ENCODE measurements at regions of chr11 and their contacts with region 1.

Region 1: GRCh38 chr11:124644426-124645280 is 22.0 kb downstream of the TBRG1 start:
- DNase-seq: peak in 3 of 5 donors; percentile 2 to 30 (median 7)
- H3K4me3 ChIP-seq: no peak overlapping the region
- H3K4me3 Mint-ChIP-seq: no peak overlapping the region
- H3K27ac ChIP-seq: no peak overlapping the region
- H3K27ac Mint-ChIP-seq: no peak overlapping the region
- H3K4me1 ChIP-seq: no peaks in the 10 kb centered on the region
- H3K4me1 Mint-ChIP-seq: no peaks in the 10 kb centered on the region
- H3K27me3 ChIP-seq: no peaks in the 10 kb centered on the region
- H3K27me3 Mint-ChIP-seq: no peaks in the 10 kb centered on the region

Region 2: GRCh38 chr11:124605719-124606118 is 38.9 kb before region 1 on chr11:
- CTCF ChIA-PET with region 1: no interaction called
- POLR2A ChIA-PET with region 1: no interaction called
- DNase-seq: no peak
- H3K4me3 ChIP-seq: no peak overlapping the region
- H3K4me3 Mint-ChIP-seq: no peak overlapping the region
- H3K27ac ChIP-seq: no peak overlapping the region
- H3K27ac Mint-ChIP-seq: no peak overlapping the region
- H3K4me1 ChIP-seq: no peaks in the 10 kb centered on the region
- H3K4me1 Mint-ChIP-seq: no peaks in the 10 kb centered on the region
- H3K27me3 ChIP-seq: no peaks in the 10 kb centered on the region
- H3K27me3 Mint-ChIP-seq: peaks cover 8 to 20% of the 10 kb centered on the region in 2 donors

Region 3: DNA sequence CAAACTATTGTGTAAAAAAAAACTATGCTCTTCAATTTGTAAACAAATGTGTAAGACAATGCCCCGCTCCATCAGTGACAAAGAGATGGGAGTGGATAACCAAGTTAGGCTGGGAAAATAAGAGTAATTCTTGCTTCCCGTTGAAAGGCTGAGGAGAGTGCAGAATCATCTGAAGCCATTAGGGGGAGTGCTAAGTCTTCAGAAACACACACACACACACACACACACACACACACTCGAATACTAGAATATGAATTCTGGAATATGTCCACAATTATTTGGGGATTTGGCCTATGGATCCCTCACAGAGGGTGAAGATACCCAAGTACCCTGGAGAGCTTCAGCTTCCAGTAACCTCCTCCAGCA is 192.8 kb after region 1 on chr11:
- CTCF ChIA-PET with region 1: interaction called, 36 read pairs
- POLR2A ChIA-PET with region 1: no interaction called
- DNase-seq: no peak
- H3K4me3 ChIP-seq: no peak overlapping the region
- H3K4me3 Mint-ChIP-seq: peak overlapping the region in 1 of 7 donors; percentile 58
- H3K27ac ChIP-seq: no peak overlapping the region
- H3K27ac Mint-ChIP-seq: no peak overlapping the region
- H3K4me1 ChIP-seq: no peaks in the 10 kb centered on the region
- H3K4me1 Mint-ChIP-seq: peaks cover 13 to 20% (median 16%) of the 10 kb centered on the region in 3 donors
- H3K27me3 ChIP-seq: peaks cover 47% of the 10 kb centered on the region
- H3K27me3 Mint-ChIP-seq: peaks cover 58 to 69% of the 10 kb centered on the region in 2 donors

Region 4: DNA sequence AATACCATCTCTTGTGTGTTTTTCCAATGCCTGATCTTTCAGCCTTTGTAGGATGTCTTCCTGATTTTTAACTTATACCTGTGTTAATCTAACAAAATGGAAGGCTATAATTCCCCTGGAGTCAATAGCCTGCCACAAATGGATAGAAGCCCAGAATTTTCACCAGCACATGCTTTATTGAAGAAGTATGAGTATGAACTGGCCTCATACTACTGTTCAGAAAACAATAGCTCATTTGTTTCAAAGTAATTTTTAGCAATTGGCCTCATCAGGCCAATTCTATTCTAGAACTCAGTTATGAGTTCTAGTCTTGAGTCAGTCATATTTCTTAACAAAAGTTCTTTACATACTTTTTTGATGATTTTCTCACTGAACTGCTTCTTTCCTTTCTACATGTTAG is 377.9 kb after region 1 on chr11:
- CTCF ChIA-PET with region 1: no interaction called
- POLR2A ChIA-PET with region 1: no interaction called
- DNase-seq: no peak
- H3K4me3 ChIP-seq: no peak overlapping the region
- H3K4me3 Mint-ChIP-seq: no peak overlapping the region
- H3K27ac ChIP-seq: no peak overlapping the region
- H3K27ac Mint-ChIP-seq: no peak overlapping the region
- H3K4me1 ChIP-seq: no peaks in the 10 kb centered on the region
- H3K4me1 Mint-ChIP-seq: no peaks in the 10 kb centered on the region
- H3K27me3 ChIP-seq: no peaks in the 10 kb centered on the region
- H3K27me3 Mint-ChIP-seq: no peaks in the 10 kb centered on the region